Left ventricle myocardium superior (tissue), 1 donor: ENCODE measurements at regions of chr4 and their contacts with region 1.

Region 1: GRCh38 chr4:126223784-126224407 is 909.1 kb downstream of the FAT4 start:
- DNase-seq: no peak
- ATAC-seq: no peak

Region 2: DNA sequence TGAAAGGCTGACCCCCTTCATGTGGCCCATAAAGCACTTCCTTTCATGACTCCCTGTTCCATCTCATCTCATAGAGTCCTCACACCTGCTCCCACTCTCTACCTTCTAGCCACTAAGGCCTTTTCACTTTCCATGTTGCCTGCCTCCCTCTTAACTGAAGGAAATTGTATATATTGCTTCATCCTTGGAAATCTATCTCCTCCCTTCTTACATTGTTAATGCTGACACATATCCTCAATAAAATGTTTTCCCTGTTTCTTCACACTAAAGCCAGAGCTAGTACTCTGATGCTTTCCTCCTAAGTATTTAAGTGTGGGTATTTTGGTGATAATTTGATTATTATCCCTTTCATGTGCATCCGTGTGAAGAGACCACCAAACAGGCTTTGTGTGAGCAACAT is 79.1 kb before region 1 on chr4:
- intact Hi-C with region 1: no loop called
- DNase-seq: no peak
- ATAC-seq: no peak

Region 3: GRCh38 chr4:126405369-126405982 is 181.6 kb after region 1 on chr4:
- intact Hi-C with region 1: loop called (anchors 10 kb)
- DNase-seq: no peak
- ATAC-seq: peak; percentile 38

Region 4: DNA sequence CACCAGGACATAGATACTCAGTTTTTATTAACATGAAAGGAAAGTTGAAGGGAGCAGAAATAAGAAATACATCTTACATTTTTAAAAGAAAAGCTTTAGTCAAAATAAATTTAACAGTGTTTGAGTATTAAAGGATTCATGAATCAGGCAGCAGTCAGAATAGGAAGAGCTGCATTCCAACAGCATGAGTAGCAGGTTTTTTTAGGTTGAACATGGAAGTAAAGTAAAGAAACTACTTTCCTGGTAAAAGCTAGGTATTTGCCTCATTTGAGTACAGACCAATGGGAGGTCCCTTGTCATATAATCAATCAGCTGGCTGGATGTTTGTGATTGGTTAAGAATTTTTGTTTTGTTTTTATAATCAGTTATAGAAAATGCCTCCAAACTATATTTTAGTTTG is 762.9 kb after region 1 on chr4:
- intact Hi-C with region 1: no loop called
- DNase-seq: no peak
- ATAC-seq: no peak